ENCODE measurements at regions of chr1 and their contacts with region 1.

Region 1: DNA sequence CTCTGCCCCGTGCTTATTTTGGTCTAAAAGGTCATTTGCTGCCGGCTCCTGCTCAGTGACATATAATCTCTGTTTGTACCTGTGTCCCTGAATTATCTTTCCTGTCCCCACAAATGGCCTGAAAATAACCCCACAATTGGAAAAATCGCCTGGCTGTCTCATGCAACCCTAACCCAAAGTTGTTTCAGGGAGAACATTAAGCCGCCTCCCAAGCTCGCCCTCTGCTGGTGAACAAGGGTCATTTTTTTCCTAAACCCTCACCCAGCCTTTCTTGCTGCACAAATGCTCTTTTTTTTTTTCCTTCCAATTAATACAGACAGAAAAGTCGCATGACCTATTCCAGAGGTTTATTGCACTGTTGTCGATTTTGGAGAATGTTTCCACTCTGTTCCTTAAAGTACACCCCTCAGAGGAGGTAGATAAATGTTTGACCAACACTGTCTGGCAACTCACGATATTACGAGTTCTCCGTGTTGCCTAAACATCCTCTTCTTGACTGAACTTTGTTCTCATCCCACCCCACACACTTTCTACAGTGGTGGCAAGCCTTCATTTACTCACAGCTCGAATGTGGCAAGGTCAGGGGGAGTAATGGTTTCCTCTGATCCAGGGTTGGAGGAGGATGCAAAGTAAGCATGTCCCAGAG is 148.7 kb downstream of the ZZZ3 start:
- DNase-seq: peak; percentile 68
- H3K4me3 Mint-ChIP-seq: no peak overlapping the region
- H3K27ac Mint-ChIP-seq: peak overlapping the region; percentile 9
- H3K4me1 Mint-ChIP-seq: peaks cover 20% of the 10 kb centered on the region
- H3K27me3 Mint-ChIP-seq: no peaks in the 10 kb centered on the region
- CTCF ChIP-seq: peak; percentile 77

Region 2: GRCh38 chr1:77313491-77313890 is 220.3 kb before region 1 on chr1:
- CTCF ChIA-PET with region 1: no interaction called
- intact Hi-C with region 1: loop called (anchors 10 kb)
- DNase-seq: peak; percentile 56
- H3K4me3 Mint-ChIP-seq: peak overlapping the region; percentile 4
- H3K27ac Mint-ChIP-seq: no peak overlapping the region
- H3K4me1 Mint-ChIP-seq: no peaks in the 10 kb centered on the region
- H3K27me3 Mint-ChIP-seq: no peaks in the 10 kb centered on the region
- CTCF ChIP-seq: peak; percentile 71

Region 3: DNA sequence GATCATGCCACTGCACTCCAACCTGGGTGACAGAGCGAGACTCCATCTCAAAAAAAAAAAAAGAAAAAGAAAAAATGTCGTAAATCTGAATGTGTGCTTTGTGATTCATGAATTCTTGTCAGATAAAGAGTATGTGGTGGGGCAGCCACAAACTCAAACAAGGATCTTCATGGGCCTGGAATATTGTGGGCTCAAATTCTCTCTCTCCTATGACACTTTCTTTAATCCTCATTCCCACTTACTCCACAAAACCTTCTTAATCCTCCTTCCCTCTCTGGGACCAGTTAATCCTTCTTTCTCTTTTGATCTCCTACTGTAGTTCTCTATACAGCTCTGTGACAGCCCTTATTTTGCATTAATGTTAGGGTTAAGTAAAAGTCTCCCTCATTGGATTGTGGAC is 139.6 kb before region 1 on chr1:
- CTCF ChIA-PET with region 1: interaction called, 3 read pairs
- intact Hi-C with region 1: loop called (anchors 10 kb)
- DNase-seq: no peak
- H3K4me3 Mint-ChIP-seq: no peak overlapping the region
- H3K27ac Mint-ChIP-seq: no peak overlapping the region
- H3K4me1 Mint-ChIP-seq: no peaks in the 10 kb centered on the region
- H3K27me3 Mint-ChIP-seq: no peaks in the 10 kb centered on the region
- CTCF ChIP-seq: no peak

Region 4: DNA sequence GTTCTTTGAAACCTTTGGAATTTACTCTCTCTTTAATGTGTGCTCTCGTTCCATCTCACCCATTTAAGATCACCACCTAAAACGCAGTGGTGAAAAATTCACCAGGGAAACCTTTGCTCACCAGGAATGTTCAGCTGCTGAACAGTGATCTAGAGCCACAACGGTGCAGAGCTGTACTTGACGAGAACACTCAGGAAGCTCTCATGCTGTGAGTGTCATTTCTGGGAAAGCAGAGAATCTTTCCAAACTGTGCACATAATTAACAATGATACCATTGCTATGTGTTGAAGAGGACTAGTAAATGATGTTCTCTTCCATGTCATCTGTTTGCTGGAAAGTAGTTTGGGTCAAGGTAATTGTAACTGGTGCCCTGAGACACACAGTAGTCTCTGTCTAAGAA is 31.5 kb after region 1 on chr1:
- CTCF ChIA-PET with region 1: no interaction called
- intact Hi-C with region 1: no loop called
- DNase-seq: no peak
- H3K4me3 Mint-ChIP-seq: no peak overlapping the region
- H3K27ac Mint-ChIP-seq: no peak overlapping the region
- H3K4me1 Mint-ChIP-seq: no peaks in the 10 kb centered on the region
- H3K27me3 Mint-ChIP-seq: no peaks in the 10 kb centered on the region
- CTCF ChIP-seq: no peak

Region 5: GRCh38 chr1:77744576-77744975 is 210.8 kb after region 1 on chr1:
- CTCF ChIA-PET with region 1: no interaction called
- intact Hi-C with region 1: no loop called
- DNase-seq: no peak
- H3K4me3 Mint-ChIP-seq: no peak overlapping the region
- H3K27ac Mint-ChIP-seq: peak overlapping the region; percentile 2
- H3K4me1 Mint-ChIP-seq: peaks cover 43% of the 10 kb centered on the region
- H3K27me3 Mint-ChIP-seq: no peaks in the 10 kb centered on the region
- CTCF ChIP-seq: no peak